GM18951 (cell line): ENCODE measurements at regions of chr4 and their contacts with region 1.

Region 1: GRCh38 chr4:153573881-153574802 is 108.0 kb downstream of the TMEM131L start:
- POLR2A ChIP-seq: no peak

Region 2: GRCh38 chr4:153432968-153433753 is 141.0 kb before region 1 on chr4:
- in situ Hi-C with region 1: loop called (anchors 10 kb)
- POLR2A ChIP-seq: peak; percentile 51

Region 3: DNA sequence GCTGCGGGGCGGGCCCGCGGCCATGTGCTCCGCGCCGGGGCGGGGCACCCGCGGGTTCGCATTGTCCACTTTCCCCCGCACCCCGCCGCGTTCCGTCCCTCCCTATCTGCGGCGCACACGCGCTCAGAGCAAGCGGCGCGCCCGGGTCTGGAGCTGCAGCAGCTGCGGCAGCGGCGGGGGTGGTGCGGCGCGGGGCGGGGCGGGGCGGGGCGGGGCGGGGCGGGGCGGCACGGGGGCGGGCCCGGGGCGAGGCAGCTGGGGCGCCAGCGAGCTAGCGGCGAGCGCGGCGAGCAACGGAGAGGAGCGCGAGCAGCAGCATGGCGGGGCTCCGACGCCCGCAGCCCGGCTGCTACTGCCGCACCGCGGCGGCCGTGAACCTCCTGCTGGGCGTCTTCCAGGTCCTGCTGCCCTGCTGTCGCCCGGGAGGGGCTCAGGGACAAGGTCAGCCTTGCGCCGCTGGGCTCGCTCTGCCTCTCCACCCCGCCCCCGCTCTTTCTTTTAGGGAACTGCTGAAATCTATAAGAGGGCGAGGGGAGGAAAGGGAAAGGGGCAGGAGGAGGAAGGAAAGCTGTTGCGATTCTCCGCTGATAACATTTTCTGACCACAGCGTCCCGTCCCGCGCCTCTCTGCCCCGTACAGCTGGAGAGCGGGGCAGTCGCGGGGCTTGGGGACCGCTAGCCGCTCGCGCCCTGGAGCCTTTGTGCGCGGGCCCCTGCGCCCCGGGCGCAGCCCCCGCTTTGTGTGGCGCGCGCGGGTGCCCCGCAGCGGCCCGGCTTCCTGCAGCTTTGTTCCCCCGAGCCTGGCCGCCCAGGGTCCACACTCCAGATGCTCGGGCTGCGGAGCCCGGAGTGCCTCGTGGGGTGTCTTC is 107.8 kb before region 1 on chr4 and contains the start of gene TMEM131L:
- in situ Hi-C with region 1: loop called (anchors 10 kb)
- POLR2A ChIP-seq: peak; percentile 78

Region 4: GRCh38 chr4:154478128-154478527 is 904.0 kb after region 1 on chr4:
- in situ Hi-C with region 1: no loop called
- POLR2A ChIP-seq: no peak